Sigmoid colon (tissue), 7 donors: ENCODE measurements at regions of chr10 and their contacts with region 1.

Region 1: DNA sequence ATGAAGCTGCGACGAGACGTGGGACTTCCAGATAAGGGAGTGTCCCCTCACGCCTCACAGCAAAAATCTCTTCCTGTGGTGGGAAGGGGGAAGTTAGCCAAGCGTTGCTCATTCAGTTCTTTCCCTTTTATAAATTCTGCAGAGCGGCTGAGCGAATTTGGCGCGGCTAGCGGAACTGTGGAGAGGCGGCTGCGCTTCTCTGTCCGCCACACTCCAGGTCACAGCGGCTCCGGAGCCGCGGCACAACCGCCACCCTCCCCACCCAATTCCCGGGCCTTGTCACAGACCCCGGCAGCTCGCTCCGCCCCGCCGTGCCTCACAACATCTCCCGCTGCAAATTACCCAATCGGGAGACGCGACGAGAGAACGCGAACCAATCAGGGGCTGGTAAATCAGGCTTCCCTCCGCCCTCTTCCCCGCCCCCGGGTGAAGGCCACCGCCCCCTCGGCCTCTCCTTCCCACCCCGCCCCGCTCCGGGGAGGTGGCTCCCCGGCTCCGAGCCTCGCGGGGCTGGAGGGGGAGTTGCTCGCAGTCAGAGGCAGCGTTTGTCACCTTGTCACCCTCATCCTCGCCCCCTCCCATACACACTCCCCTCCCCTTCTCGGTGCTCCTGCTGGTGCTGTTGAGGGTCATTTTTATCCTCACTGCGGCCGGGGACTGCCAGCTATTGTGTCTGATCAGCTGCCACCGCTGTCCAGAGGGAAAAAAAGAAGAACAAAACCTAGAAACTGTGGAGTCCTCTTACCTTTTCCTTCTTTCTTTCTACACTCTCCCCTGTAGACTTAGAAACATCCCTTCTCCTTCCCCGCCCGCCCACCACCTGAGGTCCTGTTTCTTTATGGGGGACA is 918 bp upstream of the ARHGAP21 start:
- DNase-seq: peak; percentile 99
- H3K4me3 ChIP-seq: peak overlapping the region; percentile 54 to 92 (median 90)
- H3K27ac ChIP-seq: peak overlapping the region; percentile 91 to 99 (median 98)
- H3K4me1 ChIP-seq: peaks cover 0 to 32% (median 17%) of the 10 kb centered on the region in 4 donors
- H3K27me3 ChIP-seq: no peaks in the 10 kb centered on the region
- CTCF ChIP-seq: peak in 1 of 4 experiments; percentile 18
- EP300 ChIP-seq: no peak
- POLR2A ChIP-seq: peak; percentile 85 to 95

Region 2: GRCh38 chr10:24625778-24626177 is 98.8 kb before region 1 on chr10:
- intact Hi-C with region 1: loop called (anchors 5 kb)
- DNase-seq: no peak
- H3K4me3 ChIP-seq: no peak overlapping the region
- H3K27ac ChIP-seq: no peak overlapping the region
- H3K4me1 ChIP-seq: peaks cover 0 to 15% (median 4%) of the 10 kb centered on the region in 4 donors
- H3K27me3 ChIP-seq: no peaks in the 10 kb centered on the region
- CTCF ChIP-seq: no peak
- EP300 ChIP-seq: no peak
- POLR2A ChIP-seq: no peak

Region 3: GRCh38 chr10:24952707-24953645 is 228.4 kb after region 1 on chr10:
- intact Hi-C with region 1: loop called (anchors 5 kb)
- DNase-seq: peak; percentile 78
- H3K4me3 ChIP-seq: peak overlapping the region; percentile 50 to 78 (median 73)
- H3K27ac ChIP-seq: peak overlapping the region; percentile 74 to 87 (median 82)
- H3K4me1 ChIP-seq: peaks cover 0 to 31% (median 25%) of the 10 kb centered on the region in 4 donors
- H3K27me3 ChIP-seq: no peaks in the 10 kb centered on the region
- CTCF ChIP-seq: peak in 1 of 4 experiments; percentile 42
- EP300 ChIP-seq: no peak
- POLR2A ChIP-seq: no peak